ENCODE measurements at regions of chr15 and their contacts with region 1.

Region 1: GRCh38 chr15:77543159-77543882 is 89.4 kb downstream of the LINGO1 start:
- DNase-seq: peak; percentile 74 to 96
- H3K4me3 ChIP-seq: no peak overlapping the region
- CTCF ChIP-seq: peak in 1 of 3 donors; percentile 50
- POLR2A ChIP-seq: no peak

Region 2: DNA sequence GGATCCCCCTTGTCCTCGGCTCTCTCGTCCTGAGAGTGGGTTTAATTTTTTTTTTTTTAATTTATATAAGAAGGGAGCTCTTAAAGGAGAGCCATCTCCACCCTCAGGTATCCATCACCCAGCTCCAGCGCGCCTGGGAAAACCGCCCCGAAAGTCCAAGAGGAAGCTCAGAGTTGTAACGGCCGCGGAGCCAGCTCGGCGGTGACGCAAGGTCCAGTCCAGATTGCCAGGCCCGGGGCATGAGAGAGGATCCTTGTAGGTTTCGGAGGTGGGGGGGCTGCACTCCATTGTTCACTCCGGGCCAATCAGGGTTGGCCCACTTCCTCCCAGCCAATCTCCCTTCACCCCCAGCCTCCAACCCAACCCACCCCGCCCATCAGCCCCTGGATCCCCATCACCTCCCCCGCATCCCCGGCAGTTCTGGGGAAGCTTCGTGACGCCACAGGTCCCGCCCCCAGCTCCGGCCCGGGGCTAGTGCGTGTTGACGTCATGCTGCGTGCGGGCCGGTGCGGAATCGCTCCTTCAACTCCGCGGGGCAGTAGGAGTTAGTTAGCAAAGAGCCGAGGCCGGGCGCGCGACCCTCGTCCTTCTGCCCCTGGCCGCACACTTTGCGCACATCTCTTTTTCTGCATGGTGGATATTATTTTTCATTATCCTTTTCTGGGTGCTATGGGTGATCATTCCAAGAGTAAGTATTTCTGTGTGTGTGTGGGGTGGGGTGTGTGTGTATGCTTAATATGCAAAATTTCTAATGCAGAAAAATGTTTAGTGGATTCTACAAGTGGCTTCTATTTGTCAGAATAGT is 1206.9 kb before region 1 on chr15 and contains the start of gene ISL2:
- intact Hi-C with region 1: no loop called
- DNase-seq: peak in 1 of 2 donors; percentile 92
- H3K4me3 ChIP-seq: no peak within 1 kb of the TSS
- CTCF ChIP-seq: no peak
- POLR2A ChIP-seq: no peak
- total RNA-seq, gene ISL2: not detected

Region 3: DNA sequence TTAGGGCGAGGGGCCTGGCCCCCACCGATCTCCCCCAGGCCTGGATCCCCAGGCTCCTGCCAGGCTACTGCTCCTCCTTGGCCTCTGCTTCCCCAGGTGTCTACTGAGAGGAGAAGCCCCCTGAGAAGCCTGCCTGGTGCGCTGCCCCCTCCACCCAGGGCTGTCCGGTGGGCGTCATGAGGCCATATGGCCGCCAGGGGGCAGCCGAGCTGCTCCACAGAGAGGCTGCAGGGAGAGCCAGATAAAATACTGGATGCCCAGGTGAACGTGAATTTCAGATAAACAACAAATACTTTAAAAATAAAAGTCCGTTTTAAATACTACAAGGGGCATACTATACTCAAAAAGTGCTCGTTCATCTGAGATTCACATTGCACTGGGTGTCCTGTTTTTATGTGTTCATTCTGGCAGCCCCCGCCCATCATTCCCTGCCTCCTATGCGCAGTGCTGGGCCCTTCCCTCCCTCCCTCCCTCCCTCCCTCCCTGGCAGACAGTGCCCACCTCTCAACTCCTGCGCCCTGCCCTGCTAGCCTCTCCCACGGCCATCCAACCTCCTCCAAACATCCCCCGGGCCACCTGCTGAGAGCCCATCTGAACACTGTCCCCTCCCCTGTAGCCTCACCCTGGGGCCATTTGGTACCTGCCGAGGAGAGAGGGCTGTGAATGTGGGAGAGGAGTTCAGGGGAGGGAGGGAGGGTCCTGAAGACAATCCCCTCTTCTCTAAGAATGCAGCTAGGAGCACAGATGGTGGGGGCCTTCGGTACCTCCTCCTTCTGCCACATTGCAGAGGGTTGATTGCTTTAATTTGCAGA is 518.8 kb before region 1 on chr15:
- intact Hi-C with region 1: loop called (anchors 2 kb)
- DNase-seq: peak; percentile 45 to 74
- H3K4me3 ChIP-seq: no peak overlapping the region
- CTCF ChIP-seq: peak in 1 of 3 donors; percentile 55
- POLR2A ChIP-seq: no peak

Region 4: DNA sequence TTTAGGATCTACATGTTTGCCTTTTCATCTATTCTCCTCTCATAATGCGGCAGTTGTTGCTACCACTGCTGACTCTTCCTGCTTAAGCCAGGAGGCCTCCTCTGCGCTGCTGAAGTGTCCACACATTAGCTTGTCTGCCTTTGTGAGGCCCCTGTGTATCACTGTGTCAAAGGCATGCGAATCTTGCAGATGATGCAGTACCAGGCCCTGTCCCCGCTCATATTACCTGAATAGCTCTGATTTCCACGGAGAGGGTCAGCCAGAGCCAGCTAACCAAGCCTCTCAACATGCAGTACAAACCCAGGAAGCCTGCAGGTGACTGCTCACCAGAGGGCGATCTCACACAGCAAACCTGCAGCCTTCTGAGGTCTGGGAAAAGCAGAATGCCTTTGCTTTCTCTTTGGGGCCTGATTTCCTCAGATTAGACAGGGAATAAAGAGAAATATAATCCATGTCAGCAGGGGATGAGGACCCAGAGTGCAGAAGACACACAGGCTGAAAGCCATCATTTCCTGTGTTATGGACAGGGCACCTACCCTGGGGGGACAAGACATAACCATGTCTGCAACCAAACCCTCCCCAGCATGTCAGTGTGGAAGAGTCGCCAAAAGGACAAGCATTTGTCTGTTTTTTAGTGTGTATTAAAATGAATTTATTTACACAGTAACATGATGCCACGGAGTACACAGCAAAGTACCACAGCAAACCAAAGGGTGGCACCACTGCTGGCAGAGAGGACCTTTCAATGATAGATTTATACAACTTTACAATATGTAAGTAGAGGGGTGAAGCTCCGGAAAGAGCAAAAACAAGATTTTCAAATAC is 435.6 kb before region 1 on chr15:
- intact Hi-C with region 1: loop called (anchors 10 kb)
- DNase-seq: peak in 1 of 2 donors; percentile 89
- H3K4me3 ChIP-seq: no peak overlapping the region
- CTCF ChIP-seq: no peak
- POLR2A ChIP-seq: no peak

Measured in lower leg skin (tissue), 4 donors.